ENCODE measurements at regions of chr9 and their contacts with region 1.

Region 1: DNA sequence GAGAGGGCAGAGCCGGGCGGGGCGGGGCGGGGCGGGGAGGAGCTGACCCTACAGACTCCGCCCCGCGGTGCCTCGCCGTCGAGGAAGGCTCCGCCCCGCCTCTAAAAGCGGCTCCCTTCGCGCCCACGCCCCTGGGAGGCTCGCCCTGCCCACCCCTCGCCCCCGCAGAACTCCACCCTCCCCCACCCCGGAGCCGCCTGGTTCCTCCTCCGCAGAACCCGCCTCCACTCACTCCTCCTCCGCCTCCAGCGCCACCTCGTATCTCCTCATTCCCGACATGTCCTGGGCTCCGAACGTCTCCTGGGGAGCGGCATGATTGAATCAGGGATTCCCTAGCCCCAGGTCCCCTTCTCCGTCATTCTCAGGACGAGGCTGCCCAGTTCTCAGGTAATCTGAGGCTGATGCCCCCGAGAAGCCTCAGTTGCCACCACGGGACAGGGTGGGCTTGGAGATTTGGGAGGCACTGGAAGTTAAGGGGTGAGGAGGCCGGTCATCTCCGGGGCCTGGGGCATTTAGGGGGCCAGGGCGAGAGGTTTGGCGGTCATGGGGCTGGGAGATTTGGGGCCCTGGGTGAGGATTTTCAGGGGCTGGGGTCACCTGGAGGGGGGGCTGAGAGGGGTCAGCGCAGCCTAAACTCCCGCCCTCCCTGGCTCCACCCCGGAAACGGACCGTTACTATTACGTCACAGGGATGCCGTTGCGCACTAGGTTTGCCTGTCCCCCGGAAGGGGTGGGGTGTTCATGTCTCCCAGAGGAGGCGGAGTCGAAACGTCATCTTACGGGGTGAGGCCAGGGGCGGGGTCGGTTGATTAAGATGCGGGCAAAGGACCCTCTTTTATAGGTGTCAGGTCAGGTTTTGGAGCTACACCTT is 3.2 kb upstream of the CCL27 start:
- DNase-seq: peak; percentile 90 to 94
- ATAC-seq: peak; percentile 86 to 87
- H3K4me3 ChIP-seq: peak overlapping the region; percentile 76 to 98 (median 86)
- H3K27ac ChIP-seq: peak overlapping the region; percentile 91 to 100 (median 98)
- H3K4me1 ChIP-seq: peaks cover 0 to 4% of the 10 kb centered on the region in 2 donors
- H3K27me3 ChIP-seq: no peaks in the 10 kb centered on the region
- CTCF ChIP-seq: peak in 1 of 5 experiments; percentile 9
- POLR2A ChIP-seq: peak; percentile 62 to 63

Region 2: GRCh38 chr9:34651876-34652601 is 13.6 kb before region 1 on chr9 and contains the start of gene IL11RA:
- in situ Hi-C with region 1: no loop called
- intact Hi-C with region 1: loop called (anchors 1 kb)
- DNase-seq: peak; percentile 91 to 97
- ATAC-seq: peak; percentile 83 to 84
- H3K4me3 ChIP-seq: peak within 1 kb of the TSS; percentile 40 to 62 (median 58)
- H3K27ac ChIP-seq: peak within 1 kb of the TSS; percentile 88 to 91 (median 89)
- H3K4me1 ChIP-seq: peaks cover 46 to 54% of the 10 kb centered on the region in 2 donors
- H3K27me3 ChIP-seq: no peaks in the 10 kb centered on the region
- CTCF ChIP-seq: no peak
- POLR2A ChIP-seq: peak; percentile 61 to 75
- total RNA-seq, gene IL11RA: 3.3 to 15.3 (median 11.6) TPM

Region 3: GRCh38 chr9:34701769-34702736 is 36.4 kb after region 1 on chr9:
- in situ Hi-C with region 1: no loop called
- intact Hi-C with region 1: loop called (anchors 1 kb)
- DNase-seq: peak; percentile 56 to 70
- ATAC-seq: peak; percentile 82 to 93
- H3K4me3 ChIP-seq: peak overlapping the region; percentile 63 to 93 (median 80)
- H3K27ac ChIP-seq: peak overlapping the region; percentile 64 to 71 (median 69)
- H3K4me1 ChIP-seq: peaks cover 4 to 5% of the 10 kb centered on the region in 2 donors
- H3K27me3 ChIP-seq: no peaks in the 10 kb centered on the region
- CTCF ChIP-seq: peak; percentile 87 to 98 (median 89)
- POLR2A ChIP-seq: no peak

Region 4: DNA sequence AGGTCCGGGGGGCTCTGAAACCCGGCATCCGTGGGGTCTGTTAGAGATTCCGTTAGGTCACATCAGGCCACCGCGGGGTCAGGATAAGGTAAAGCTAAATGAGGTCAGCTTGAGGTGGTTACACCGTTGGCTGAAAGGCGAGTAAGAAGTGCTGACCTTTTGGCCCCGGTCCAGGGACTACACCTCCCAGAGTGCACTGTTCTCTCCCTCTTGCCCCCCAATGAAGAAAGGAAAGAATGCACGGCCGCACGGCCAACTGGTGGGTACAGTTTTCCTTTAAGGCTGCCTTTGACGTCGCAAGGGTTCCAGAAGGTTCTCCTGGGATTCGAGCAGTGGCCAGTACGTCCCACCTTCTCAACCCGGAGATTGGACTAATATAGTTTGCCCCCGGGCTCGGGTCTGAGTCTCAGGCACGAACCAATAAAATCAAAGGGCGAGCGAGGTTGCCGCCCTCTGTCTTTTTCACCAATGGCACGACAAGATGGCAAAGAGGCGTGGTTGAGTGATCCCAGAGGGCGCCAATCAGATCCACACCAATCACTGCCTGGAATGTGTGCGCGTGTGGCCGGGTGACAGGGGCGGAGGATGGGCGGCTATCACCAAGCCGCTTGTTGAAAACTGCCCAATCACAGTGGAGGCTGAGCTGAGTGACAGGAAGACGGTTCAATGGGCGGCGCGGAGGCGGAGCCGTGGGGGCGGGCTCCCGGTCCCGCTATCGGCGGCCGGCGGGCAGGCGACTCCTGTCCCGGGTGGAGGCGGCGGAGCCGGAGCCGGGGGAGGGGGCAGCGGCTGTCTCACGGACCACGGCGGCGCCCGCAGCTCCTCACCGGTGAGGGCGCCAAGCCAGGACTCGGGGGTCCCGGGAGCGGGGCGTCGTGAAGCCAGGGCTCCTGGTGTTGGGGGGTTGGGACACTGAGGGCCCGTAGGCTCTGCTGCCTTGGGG is 323.7 kb after region 1 on chr9 and contains the start of gene DNAJB5:
- in situ Hi-C with region 1: no loop called
- intact Hi-C with region 1: loop called (anchors 5 kb)
- DNase-seq: peak; percentile 99 to 100
- ATAC-seq: peak; percentile 47 to 51
- H3K4me3 ChIP-seq: peak within 1 kb of the TSS; percentile 80 to 91 (median 89)
- H3K27ac ChIP-seq: peak within 1 kb of the TSS in 3 of 4 donors; percentile 85 to 93 (median 89)
- H3K4me1 ChIP-seq: peaks cover 27 to 28% of the 10 kb centered on the region in 2 donors
- H3K27me3 ChIP-seq: no peaks in the 10 kb centered on the region
- CTCF ChIP-seq: no peak
- POLR2A ChIP-seq: no peak
- total RNA-seq, gene DNAJB5: 75.3 to 187 (median 128) TPM

Region 5: GRCh38 chr9:35096035-35096849 is 430.6 kb after region 1 on chr9 and contains the start of gene PIGO:
- in situ Hi-C with region 1: loop called in 1 of 4 experiments (anchors 25 kb)
- intact Hi-C with region 1: no loop called
- DNase-seq: peak; percentile 81 to 84
- ATAC-seq: peak; percentile 91 to 92
- H3K4me3 ChIP-seq: peak within 1 kb of the TSS; percentile 82 to 99 (median 83)
- H3K27ac ChIP-seq: peak within 1 kb of the TSS; percentile 89 to 99 (median 92)
- H3K4me1 ChIP-seq: peaks cover 6 to 14% of the 10 kb centered on the region in 2 donors
- H3K27me3 ChIP-seq: no peaks in the 10 kb centered on the region
- CTCF ChIP-seq: peak; percentile 77 to 94 (median 79)
- POLR2A ChIP-seq: peak; percentile 22 to 39
- total RNA-seq, gene PIGO: 6.6 to 12.3 (median 7.3) TPM